ENCODE measurements at regions of chr2 and their contacts with region 1.

Region 1: DNA sequence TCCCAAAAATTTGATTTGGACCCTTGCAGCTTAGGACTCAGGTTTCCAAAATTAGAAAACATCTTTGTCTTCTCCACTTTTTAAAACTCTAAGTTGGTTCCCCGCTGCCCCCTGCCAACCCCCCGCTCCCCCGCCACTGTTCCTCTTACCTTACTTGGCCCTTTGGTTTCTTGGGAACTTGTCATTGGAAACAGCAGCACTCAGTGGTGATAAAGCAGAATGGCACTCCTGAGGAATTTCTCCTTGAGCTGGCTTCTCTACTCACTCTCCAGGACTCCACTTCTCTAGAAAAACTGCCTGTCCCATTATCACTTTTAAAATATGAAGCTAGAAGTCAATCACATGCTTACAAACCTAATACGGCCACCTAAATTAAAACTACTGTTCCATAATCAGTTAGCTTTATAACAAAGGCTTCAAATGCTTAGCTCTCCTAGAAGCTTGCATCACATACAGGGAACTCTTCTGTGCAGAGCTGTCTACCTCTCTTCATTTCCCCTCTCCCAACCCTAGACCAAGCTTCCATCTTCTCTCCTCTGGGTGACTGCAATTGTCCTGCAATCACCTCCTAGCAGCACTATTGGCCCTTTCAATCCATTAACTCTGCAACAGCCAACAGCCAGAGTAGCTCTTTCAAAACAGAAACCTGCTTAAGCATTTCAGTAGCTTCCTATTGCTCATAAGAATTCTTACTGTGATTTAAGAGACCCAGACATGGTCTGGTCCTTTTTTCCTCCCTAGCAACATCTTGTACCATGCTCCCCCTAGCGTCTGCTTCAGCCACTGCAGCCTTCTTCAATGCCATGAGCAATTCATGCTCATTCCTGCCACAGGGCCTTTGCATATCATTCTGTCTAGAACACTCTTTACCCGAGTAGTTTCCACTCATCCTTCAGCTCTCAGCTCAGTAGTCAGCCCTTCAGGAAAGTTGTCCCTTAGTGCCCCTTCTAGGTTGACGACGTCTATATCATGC is 15.2 kb upstream of the PLEKHM3 start:
- DNase-seq: peak; percentile 89
- ATAC-seq: peak; percentile 95
- H3K4me3 Mint-ChIP-seq: no peak overlapping the region
- H3K27ac Mint-ChIP-seq: no peak overlapping the region
- H3K4me1 Mint-ChIP-seq: peaks cover 2% of the 10 kb centered on the region
- H3K27me3 Mint-ChIP-seq: no peaks in the 10 kb centered on the region
- CTCF ChIP-seq: peak; percentile 87

Region 2: DNA sequence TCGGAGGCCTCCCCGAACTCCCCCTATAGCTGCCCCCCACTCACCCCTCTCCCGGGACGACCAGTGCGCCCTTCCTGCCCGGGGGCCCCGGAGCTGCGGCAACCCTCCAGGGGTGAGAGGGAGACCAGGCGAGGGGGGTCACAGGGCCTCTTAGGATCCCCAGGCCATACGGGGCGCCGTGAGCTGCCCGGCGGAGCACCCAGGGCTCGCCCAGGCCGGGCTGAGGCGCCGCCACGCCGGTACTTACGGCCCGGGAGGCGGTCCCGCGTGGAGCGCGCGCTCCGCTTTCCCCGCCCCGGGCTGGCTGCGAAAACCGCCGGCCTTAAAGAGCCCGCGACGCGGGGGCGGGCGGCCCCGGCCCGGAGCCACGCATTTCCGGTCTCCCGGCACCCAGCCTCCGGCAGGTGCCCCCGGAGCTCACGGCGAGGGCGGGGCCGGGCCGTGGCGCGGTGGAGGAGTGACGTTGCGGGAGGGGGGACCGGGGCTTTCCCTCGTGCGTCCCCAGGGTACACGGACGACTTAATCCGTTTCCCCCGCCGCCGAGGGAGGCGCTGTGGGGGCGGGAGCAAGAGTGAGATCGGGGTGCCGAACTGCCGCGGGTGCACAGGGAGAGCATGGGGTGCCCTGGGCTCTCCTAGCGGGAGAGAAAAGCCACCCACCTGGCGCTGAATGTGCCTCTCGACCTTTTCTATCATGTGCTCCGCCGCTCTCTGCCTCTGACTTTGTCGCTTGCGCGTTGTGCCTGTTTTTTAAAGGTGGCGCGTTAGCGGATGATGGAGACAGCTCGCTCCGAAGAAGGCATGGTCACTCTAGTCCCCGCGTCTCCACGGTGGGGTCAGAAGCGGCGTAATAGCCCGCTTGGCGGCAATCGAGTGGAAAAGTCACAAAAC is 415.2 kb before region 1 on chr2 and contains the start of gene METTL21A:
- CTCF ChIA-PET with region 1: interaction called, 31 read pairs
- POLR2A ChIA-PET with region 1: interaction called, 3 read pairs
- intact Hi-C with region 1: loop called (anchors 5 kb)
- DNase-seq: peak; percentile 95
- ATAC-seq: peak; percentile 85
- H3K4me3 Mint-ChIP-seq: peak within 1 kb of the TSS; percentile 96
- H3K27ac Mint-ChIP-seq: peak within 1 kb of the TSS; percentile 97
- H3K4me1 Mint-ChIP-seq: peaks cover 42% of the 10 kb centered on the region
- H3K27me3 Mint-ChIP-seq: no peaks in the 10 kb centered on the region
- CTCF ChIP-seq: no peak
- total RNA-seq, gene METTL21A: 28.9 to 30.7 TPM

Region 3: GRCh38 chr2:207734264-207734635 is 306.2 kb before region 1 on chr2:
- CTCF ChIA-PET with region 1: interaction called, 12 read pairs
- POLR2A ChIA-PET with region 1: no interaction called
- intact Hi-C with region 1: no loop called
- DNase-seq: no peak
- ATAC-seq: no peak
- H3K4me3 Mint-ChIP-seq: no peak overlapping the region
- H3K27ac Mint-ChIP-seq: no peak overlapping the region
- H3K4me1 Mint-ChIP-seq: no peaks in the 10 kb centered on the region
- H3K27me3 Mint-ChIP-seq: no peaks in the 10 kb centered on the region
- CTCF ChIP-seq: no peak

Region 4: GRCh38 chr2:207769597-207770486 is 270.6 kb before region 1 on chr2 and contains the start of gene FZD5:
- CTCF ChIA-PET with region 1: interaction called, 18 read pairs
- POLR2A ChIA-PET with region 1: interaction called, 3 read pairs
- intact Hi-C with region 1: loop called (anchors 5 kb)
- DNase-seq: peak; percentile 92
- ATAC-seq: peak; percentile 89
- H3K4me3 Mint-ChIP-seq: peak within 1 kb of the TSS; percentile 86
- H3K27ac Mint-ChIP-seq: peak within 1 kb of the TSS; percentile 16
- H3K4me1 Mint-ChIP-seq: peaks cover 24% of the 10 kb centered on the region
- H3K27me3 Mint-ChIP-seq: peaks cover 34% of the 10 kb centered on the region
- CTCF ChIP-seq: peak; percentile 69
- total RNA-seq, gene FZD5: 1.7 TPM

Region 5: DNA sequence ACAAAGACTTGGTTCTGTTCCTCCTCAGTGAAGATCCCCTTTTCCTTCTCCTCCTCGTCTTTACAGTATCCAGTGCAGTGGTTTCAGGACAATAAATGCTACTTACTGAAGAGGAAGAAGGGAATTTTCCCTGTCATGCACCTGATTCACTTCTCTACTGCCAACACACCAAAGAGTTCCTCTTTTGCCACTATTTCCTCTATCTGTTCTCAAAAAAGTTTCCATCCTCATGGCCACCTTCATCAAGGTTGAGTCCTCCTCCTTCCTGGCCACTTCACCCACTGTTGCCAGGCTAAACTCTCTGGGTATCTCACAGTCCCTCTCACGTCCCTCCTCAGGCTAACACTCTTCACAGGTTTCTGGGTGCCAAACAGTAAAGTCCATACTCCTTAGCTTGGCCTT is 56.8 kb before region 1 on chr2:
- CTCF ChIA-PET with region 1: no interaction called
- POLR2A ChIA-PET with region 1: no interaction called
- intact Hi-C with region 1: no loop called
- DNase-seq: no peak
- ATAC-seq: no peak
- H3K4me3 Mint-ChIP-seq: no peak overlapping the region
- H3K27ac Mint-ChIP-seq: no peak overlapping the region
- H3K4me1 Mint-ChIP-seq: peaks cover 12% of the 10 kb centered on the region
- H3K27me3 Mint-ChIP-seq: no peaks in the 10 kb centered on the region
- CTCF ChIP-seq: no peak

Region 6: GRCh38 chr2:208013285-208014178 is 27.0 kb before region 1 on chr2:
- CTCF ChIA-PET with region 1: interaction called, 22 read pairs
- POLR2A ChIA-PET with region 1: no interaction called
- intact Hi-C with region 1: no loop called
- DNase-seq: peak; percentile 42
- ATAC-seq: peak; percentile 89
- H3K4me3 Mint-ChIP-seq: no peak overlapping the region
- H3K27ac Mint-ChIP-seq: peak overlapping the region; percentile 86
- H3K4me1 Mint-ChIP-seq: peaks cover 34% of the 10 kb centered on the region
- H3K27me3 Mint-ChIP-seq: no peaks in the 10 kb centered on the region
- CTCF ChIP-seq: no peak

Region 7: GRCh38 chr2:208062113-208062512 is 21.6 kb after region 1 on chr2:
- CTCF ChIA-PET with region 1: interaction called, 13 read pairs
- POLR2A ChIA-PET with region 1: no interaction called
- intact Hi-C with region 1: no loop called
- DNase-seq: peak; percentile 26
- ATAC-seq: no peak
- H3K4me3 Mint-ChIP-seq: no peak overlapping the region
- H3K27ac Mint-ChIP-seq: no peak overlapping the region
- H3K4me1 Mint-ChIP-seq: no peaks in the 10 kb centered on the region
- H3K27me3 Mint-ChIP-seq: peaks cover 1% of the 10 kb centered on the region
- CTCF ChIP-seq: no peak

Region 8: DNA sequence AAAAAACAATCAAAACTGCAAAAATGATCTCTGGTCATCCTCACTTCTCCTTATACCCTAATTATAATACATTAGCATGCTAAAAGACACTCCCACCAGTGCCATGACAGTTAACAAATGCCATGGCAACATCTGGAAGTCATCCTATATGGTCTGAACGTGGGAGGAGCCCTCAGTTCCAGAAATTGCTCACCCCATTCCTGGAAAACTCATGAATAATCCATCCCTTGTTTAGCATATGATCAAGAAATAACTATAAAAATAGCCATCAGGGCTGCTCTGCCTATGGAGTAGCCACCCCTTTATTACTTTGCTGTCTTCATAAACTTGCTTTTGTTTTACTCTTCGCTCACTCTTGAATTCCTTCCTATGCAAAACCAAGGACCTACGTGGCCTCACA is 155.0 kb after region 1 on chr2:
- CTCF ChIA-PET with region 1: no interaction called
- POLR2A ChIA-PET with region 1: no interaction called
- intact Hi-C with region 1: no loop called
- DNase-seq: no peak
- ATAC-seq: no peak
- H3K4me3 Mint-ChIP-seq: no peak overlapping the region
- H3K27ac Mint-ChIP-seq: no peak overlapping the region
- H3K4me1 Mint-ChIP-seq: no peaks in the 10 kb centered on the region
- H3K27me3 Mint-ChIP-seq: no peaks in the 10 kb centered on the region
- CTCF ChIP-seq: no peak